ENCODE measurements at regions of chr5 and their contacts with region 1.

Region 1: DNA sequence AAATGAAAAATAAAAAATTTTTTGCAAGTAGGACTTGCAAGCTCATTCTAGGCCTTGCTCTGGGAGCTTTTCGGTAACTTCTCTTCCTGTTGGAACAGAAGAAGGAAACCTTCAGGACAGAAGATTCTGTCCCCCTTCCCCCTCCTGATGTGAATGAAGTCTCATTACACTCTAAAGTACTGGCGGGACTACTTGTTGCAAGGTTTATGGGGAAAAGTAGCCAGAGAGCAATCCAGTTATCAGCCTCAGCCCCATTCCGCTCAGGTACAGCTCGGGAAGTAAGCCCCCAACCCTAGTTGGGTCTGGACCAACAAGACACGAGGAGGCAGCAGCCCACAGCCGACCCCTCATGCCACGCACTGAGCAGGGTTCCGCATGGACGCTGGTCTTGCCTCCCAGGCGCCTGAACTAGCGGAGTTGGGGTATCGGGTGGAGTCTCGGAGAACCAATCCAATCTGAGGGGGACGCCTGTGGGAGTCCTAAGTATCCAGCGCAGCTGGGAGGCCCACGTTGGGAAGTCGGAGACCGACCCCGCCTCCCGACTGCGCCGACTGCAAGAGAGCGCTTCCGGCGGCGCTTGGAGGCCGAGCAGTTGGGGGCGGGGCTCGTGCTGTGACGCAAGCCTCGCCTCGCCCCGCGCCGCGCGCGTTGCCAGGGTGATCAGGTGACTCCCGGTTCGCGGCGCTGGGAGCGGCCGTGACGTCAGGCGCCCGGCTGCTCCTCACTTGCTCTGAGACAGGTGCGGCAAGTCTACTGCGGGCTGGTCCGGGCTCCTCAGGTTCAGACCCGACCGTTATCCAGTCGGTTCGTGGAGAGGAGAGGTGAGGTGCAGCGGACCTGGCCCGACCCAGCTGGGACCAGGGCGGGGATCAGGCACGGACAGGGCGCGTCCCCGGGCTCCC is at the start of gene CYSTM1:
- DNase-seq: peak; percentile 98
- ATAC-seq: peak; percentile 93
- H3K4me3 Mint-ChIP-seq: peak within 1 kb of the TSS; percentile 91
- H3K27ac Mint-ChIP-seq: peak within 1 kb of the TSS; percentile 82
- H3K4me1 Mint-ChIP-seq: peaks cover 15% of the 10 kb centered on the region
- H3K27me3 Mint-ChIP-seq: no peaks in the 10 kb centered on the region
- total RNA-seq, gene CYSTM1: 15.2 to 18.7 TPM

Region 2: DNA sequence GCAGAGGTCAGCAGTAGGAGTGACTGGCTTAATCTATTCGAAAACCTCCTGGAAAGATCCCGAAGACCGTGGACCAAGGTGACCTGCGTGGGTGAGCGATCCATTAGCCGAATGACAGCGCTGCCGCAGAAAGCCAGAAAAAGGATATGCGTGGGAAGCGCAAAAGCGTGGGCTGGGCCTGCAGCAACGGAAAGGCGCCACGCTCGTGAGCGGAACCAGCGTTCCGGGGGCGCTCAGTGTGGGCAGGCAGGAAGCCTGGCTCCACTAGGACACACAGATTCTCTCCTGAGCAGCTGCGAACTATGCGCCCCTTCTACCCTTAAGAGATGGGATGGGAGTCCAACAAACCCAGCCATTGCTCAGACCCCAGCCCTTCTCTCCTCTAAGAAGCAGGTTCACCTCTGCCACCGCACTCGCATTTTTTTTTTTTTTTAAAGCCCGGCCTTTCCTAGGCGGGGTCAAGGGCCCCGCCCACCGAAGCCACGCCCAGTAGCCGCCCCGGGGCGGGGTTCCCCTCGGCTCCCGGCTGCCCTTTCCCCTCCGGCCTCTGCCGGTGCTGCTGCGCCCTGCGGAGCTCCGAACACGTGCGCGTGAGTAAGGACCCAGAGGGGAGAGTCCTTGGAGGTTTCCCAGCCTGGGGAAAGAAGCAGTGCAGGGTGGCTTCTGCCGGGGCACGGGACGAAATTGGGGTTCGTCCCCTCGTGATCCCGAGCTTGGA is 901.0 kb before region 1 on chr5:
- CTCF ChIA-PET with region 1: no interaction called
- POLR2A ChIA-PET with region 1: no interaction called
- intact Hi-C with region 1: no loop called
- DNase-seq: peak; percentile 95
- ATAC-seq: peak; percentile 90
- H3K4me3 Mint-ChIP-seq: peak overlapping the region; percentile 95
- H3K27ac Mint-ChIP-seq: peak overlapping the region; percentile 88
- H3K4me1 Mint-ChIP-seq: peaks cover 54% of the 10 kb centered on the region
- H3K27me3 Mint-ChIP-seq: no peaks in the 10 kb centered on the region

Region 3: GRCh38 chr5:139422307-139422893 is 752.3 kb before region 1 on chr5:
- CTCF ChIA-PET with region 1: no interaction called
- POLR2A ChIA-PET with region 1: no interaction called
- intact Hi-C with region 1: no loop called
- DNase-seq: peak; percentile 66
- ATAC-seq: peak; percentile 93
- H3K4me3 Mint-ChIP-seq: no peak overlapping the region
- H3K27ac Mint-ChIP-seq: no peak overlapping the region
- H3K4me1 Mint-ChIP-seq: peaks cover 5% of the 10 kb centered on the region
- H3K27me3 Mint-ChIP-seq: no peaks in the 10 kb centered on the region

Region 4: DNA sequence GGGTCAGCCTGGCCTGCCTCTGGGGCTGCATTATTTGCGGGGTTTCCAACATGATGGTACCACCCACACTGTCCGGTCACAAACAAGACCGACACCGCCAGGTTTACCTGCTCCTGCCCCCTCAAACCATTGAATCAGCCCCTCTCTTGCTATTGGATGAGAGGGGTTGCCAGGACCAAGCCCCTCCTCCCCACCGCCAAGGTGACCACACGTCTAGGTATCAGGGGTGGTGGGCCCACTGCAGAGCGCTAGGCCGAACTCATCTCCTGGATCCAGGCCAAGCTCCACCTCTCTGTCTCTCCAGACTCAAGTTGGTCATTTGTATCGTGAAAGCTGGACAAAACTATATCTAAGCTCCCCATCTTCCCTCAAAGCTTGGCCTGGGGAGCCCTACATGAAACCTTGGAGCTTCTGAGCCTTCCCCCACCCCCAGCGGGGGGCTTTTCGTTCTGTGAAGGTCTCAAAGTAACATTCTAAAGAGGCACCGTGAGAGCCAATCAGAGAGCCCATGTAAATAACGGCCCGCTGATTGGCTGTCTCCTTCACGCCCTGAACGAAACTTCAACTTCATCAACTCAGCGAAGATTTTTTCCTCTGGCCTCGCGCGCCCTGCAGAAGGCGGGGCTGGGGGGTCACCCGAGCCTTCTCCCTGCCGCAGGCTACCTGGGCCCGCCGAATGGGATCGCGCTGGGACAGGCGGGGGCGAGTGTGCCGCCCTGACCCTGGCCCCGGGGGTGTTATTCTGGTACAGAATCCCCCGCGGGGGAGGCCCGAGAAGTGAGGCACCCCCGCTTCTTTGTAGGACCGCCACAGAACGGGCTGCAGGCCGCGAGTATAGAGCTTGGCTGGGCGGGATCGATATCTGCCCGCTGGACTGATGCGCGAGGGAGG is 428.7 kb before region 1 on chr5:
- CTCF ChIA-PET with region 1: no interaction called
- POLR2A ChIA-PET with region 1: no interaction called
- intact Hi-C with region 1: no loop called
- DNase-seq: peak; percentile 70
- ATAC-seq: peak; percentile 27
- H3K4me3 Mint-ChIP-seq: peak overlapping the region; percentile 60
- H3K27ac Mint-ChIP-seq: no peak overlapping the region
- H3K4me1 Mint-ChIP-seq: peaks cover 29% of the 10 kb centered on the region
- H3K27me3 Mint-ChIP-seq: peaks cover 16% of the 10 kb centered on the region

Region 5: GRCh38 chr5:139844472-139845145 is 330.1 kb before region 1 on chr5:
- CTCF ChIA-PET with region 1: no interaction called
- POLR2A ChIA-PET with region 1: no interaction called
- intact Hi-C with region 1: no loop called
- DNase-seq: peak; percentile 88
- ATAC-seq: peak; percentile 47
- H3K4me3 Mint-ChIP-seq: no peak overlapping the region
- H3K27ac Mint-ChIP-seq: no peak overlapping the region
- H3K4me1 Mint-ChIP-seq: peaks cover 7% of the 10 kb centered on the region
- H3K27me3 Mint-ChIP-seq: peaks cover 24% of the 10 kb centered on the region

Region 6: GRCh38 chr5:140107312-140108083 is 67.2 kb before region 1 on chr5:
- CTCF ChIA-PET with region 1: no interaction called
- POLR2A ChIA-PET with region 1: no interaction called
- intact Hi-C with region 1: loop called (anchors 1 to 2 kb)
- DNase-seq: peak; percentile 96
- ATAC-seq: peak; percentile 90
- H3K4me3 Mint-ChIP-seq: peak overlapping the region; percentile 99
- H3K27ac Mint-ChIP-seq: peak overlapping the region; percentile 95
- H3K4me1 Mint-ChIP-seq: peaks cover 43% of the 10 kb centered on the region
- H3K27me3 Mint-ChIP-seq: peaks cover 3% of the 10 kb centered on the region

Region 7: DNA sequence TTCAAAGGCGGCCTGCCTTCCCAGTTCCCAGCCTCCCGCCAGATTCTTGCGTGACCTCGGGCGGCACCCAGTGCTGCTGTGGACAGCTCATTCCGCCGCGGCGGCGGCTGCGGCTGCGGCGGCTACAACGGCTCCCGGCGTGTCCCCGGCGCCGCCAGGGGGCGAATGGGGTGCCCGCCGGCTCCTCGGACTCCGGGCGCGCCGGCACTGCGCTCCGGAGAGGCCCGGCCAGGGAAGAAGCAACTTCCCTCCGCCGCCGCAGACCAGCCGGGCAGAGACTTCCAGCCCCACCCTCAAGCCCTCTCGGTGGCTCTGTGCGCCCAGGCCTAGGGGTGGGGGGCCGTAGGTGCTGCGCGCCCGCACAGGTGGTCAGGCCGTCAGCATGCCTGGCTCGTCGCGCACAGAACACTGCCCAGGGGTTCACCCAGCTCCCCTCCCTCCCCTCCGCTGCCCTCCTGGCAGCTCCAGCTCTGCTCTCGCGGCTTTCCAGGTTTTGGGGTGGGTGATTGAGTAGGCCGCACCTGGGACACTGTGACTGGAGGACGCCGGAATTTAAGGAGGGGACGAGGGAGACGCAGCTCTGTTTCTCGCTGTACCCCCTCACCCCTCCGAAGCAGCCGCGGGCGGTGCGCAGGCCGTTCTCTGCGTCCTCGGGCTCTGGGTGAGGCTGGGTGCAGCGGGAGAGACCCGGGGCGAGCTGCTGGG is 28.7 kb before region 1 on chr5:
- CTCF ChIA-PET with region 1: interaction called, 18 read pairs
- POLR2A ChIA-PET with region 1: no interaction called
- intact Hi-C with region 1: loop called in 1 of 2 experiments (anchors 1 kb)
- DNase-seq: peak; percentile 79
- ATAC-seq: peak; percentile 84
- H3K4me3 Mint-ChIP-seq: peak overlapping the region; percentile 26
- H3K27ac Mint-ChIP-seq: no peak overlapping the region
- H3K4me1 Mint-ChIP-seq: peaks cover 14% of the 10 kb centered on the region
- H3K27me3 Mint-ChIP-seq: peaks cover 12% of the 10 kb centered on the region

Region 8: GRCh38 chr5:140302786-140303639 is 128.3 kb after region 1 on chr5 and contains the start of gene PFDN1:
- CTCF ChIA-PET with region 1: no interaction called
- POLR2A ChIA-PET with region 1: no interaction called
- intact Hi-C with region 1: loop called in 1 of 2 experiments (anchors 1 kb)
- DNase-seq: peak; percentile 96
- ATAC-seq: peak; percentile 99
- H3K4me3 Mint-ChIP-seq: peak within 1 kb of the TSS; percentile 91
- H3K27ac Mint-ChIP-seq: peak within 1 kb of the TSS; percentile 91
- H3K4me1 Mint-ChIP-seq: peaks cover 29% of the 10 kb centered on the region
- H3K27me3 Mint-ChIP-seq: peaks cover 4% of the 10 kb centered on the region
- total RNA-seq, gene PFDN1: 52.6 to 63.2 TPM

Region 9: DNA sequence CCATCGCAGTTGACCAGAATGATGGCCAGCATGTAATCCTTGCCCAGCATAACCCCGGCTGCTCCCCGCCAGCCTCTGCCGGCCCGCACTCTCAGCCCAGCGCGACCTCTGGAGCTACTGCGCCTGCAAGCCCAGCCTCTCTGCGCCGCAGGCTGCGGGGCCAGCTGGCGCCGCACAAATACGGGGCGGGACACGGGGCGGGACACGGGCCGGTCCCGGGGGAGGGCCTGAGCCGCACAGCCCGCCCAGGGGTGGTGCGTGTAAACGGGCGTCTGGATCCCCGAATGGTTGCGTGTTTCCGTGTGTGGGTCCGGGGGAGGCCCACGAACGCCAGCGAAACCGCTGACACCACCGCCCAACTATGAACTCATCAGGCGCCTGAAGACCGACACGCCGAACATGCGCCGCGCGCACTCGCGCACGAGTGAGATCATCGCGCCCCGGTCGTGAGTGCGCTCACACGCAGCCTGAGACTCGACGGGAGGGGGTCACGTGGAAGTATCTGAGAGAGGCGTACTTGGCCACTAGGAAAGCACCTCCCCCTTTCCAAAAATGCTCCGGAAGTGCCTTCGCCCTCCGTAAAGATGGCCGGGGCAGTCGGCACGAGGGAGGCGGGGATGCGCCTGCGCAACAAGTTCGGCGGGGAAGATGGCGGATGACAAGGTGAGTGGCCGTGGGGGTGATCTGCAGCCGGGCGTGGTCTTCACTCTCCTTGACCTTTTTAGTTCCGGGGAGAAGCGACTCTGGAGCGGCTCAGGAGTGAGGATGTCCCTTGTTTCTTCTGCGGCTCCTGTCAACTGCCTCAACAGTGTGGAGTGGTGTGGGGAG is 389.7 kb after region 1 on chr5 and contains the starts of genes APBB3 and SLC35A4:
- CTCF ChIA-PET with region 1: no interaction called
- POLR2A ChIA-PET with region 1: no interaction called
- intact Hi-C with region 1: loop called in 1 of 2 experiments (anchors 1 kb)
- DNase-seq: peak; percentile 96
- ATAC-seq: peak; percentile 95
- H3K4me3 Mint-ChIP-seq: peak within 1 kb of the TSS; percentile 98
- H3K27ac Mint-ChIP-seq: peak within 1 kb of the TSS; percentile 99
- H3K4me1 Mint-ChIP-seq: peaks cover 49% of the 10 kb centered on the region
- H3K27me3 Mint-ChIP-seq: no peaks in the 10 kb centered on the region
- total RNA-seq, gene APBB3: 12.8 to 19.0 TPM
- total RNA-seq, gene SLC35A4: 61.8 to 65.4 TPM

Region 10: DNA sequence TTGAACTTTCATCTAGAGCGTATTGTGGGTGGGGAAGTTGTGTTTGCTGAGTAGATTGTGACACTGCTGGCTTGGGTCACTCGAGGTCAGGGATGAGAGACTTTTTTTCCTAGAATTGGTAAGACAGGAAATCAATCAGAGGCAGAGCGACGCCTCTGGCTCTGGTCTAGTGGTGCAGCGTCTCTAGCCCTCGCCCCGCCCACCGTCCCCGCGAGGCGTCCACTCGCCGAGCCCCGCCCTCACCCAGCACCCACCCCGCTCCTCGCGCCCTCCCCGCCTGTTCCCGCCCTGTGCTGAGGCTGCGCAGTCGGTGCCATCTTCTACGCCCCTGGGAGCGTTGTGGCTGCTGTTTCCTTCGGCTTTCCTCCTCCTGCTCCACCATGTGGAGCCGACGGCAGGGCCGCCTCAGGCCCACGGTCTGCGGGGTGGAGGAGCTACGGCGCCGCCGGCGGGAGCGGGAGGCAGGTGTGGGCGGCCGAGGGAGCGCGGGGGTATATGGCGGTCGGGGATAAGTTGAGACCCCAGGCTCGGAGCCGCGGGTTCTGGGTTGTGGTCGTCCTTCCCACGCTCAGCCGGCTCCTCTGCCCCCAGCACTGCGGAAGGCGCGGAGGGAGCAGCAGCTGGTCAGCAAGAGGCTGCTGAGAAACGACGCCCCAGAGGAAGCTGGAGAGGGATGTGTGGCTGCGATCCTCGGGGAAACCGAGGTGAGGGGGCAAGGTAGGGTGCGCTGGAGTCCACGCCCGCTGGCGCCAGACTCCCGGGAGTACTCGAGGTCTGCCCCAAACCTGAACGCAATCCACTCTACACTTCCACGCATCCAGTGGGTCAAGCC is 464.6 kb after region 1 on chr5 and contains the start of gene TMCO6:
- CTCF ChIA-PET with region 1: interaction called, 3 read pairs
- POLR2A ChIA-PET with region 1: no interaction called
- intact Hi-C with region 1: loop called in 1 of 2 experiments (anchors 1 kb)
- DNase-seq: peak; percentile 99
- ATAC-seq: peak; percentile 94
- H3K4me3 Mint-ChIP-seq: peak within 1 kb of the TSS; percentile 93
- H3K27ac Mint-ChIP-seq: peak within 1 kb of the TSS; percentile 95
- H3K4me1 Mint-ChIP-seq: peaks cover 39% of the 10 kb centered on the region
- H3K27me3 Mint-ChIP-seq: no peaks in the 10 kb centered on the region
- total RNA-seq, gene TMCO6: 36.5 to 36.6 TPM

Measured in activated CD4-positive, alpha-beta T cell treated with anti-CD3 and anti-CD28 coated beads for 36 hours (primary cell).